ENCODE measurements at regions of chr12 and their contacts with region 1.

Region 1: GRCh38 chr12:131104463-131105350 is 151.0 kb downstream of the ADGRD1 start:
- DNase-seq: peak; percentile 84
- H3K4me3 ChIP-seq: no peak overlapping the region
- H3K27ac ChIP-seq: no peak overlapping the region
- H3K4me1 ChIP-seq: no peaks in the 10 kb centered on the region
- H3K27me3 ChIP-seq: no peaks in the 10 kb centered on the region
- CTCF ChIP-seq: peak; percentile 81

Region 2: DNA sequence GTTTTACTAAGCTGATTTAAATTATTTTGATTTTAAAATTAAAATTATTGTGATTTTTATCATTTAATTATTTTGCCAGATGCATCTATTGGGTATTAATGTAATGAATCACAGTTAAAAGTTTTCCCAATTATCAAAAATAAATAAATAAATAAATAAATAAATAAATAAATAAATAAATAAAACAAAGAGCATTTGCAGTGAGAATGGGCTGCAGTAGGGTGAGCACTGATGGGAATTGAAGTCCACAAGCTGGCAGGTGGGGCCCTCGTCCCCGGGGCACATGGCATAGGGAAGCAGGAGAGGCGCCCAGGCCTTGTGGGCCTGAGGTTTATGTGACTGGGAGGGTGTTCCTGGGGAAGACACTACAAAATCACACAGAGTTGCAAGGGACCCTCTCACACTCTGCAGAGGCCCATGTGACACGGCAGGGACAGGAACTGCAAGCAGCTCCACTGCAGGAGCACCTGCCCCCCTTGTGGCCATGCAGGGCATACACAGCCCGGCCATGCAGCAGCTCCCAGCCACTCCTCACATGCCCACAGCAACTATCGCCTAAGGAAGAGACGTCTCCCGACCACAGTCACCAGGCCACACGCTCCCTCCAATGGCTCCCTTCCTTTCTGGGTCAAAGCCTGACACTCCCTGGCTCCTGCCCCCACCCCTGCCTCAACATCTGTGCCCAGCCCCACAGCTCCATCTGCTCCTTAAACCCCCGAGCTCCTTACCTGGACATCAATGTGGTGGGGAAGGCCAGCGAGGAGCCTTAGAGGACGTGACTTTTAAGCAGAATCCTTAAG is 349.9 kb after region 1 on chr12:
- intact Hi-C with region 1: loop called (anchors 5 kb)
- DNase-seq: no peak
- H3K4me3 ChIP-seq: no peak overlapping the region
- H3K27ac ChIP-seq: no peak overlapping the region
- H3K4me1 ChIP-seq: no peaks in the 10 kb centered on the region
- H3K27me3 ChIP-seq: no peaks in the 10 kb centered on the region
- CTCF ChIP-seq: peak; percentile 52

Region 3: DNA sequence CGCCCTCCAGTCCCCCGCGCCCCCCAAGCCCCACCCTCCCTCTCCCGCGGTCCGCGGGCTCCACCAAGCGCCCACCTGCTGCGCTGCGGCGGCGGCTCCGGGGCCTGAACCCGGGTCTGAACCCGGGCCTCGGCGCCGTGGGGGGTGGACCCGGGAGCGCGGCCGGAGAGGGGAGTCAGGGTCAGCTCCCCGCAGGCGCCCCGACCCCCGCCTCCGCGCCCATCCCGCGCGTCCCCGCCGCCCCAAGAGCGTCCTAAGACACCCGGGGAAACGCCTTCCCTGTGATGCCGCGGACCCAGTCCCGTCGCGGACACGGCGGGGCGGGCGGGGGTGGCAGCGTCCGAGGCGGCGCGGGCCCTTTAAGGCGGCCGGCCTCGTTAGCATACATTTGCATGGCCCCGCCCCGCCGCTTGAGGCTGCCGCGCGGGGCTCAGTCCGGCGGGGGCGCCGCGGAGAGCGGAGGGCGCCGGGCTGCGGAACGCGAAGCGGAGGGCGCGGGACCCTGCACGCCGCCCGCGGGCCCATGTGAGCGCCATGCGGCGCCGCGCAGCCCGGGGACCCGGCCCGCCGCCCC is 723.3 kb after region 1 on chr12 and contains the start of gene MMP17:
- intact Hi-C with region 1: loop called (anchors 10 kb)
- DNase-seq: no peak
- H3K4me3 ChIP-seq: peak within 1 kb of the TSS; percentile 35
- H3K27ac ChIP-seq: no peak within 1 kb of the TSS
- H3K4me1 ChIP-seq: no peaks in the 10 kb centered on the region
- H3K27me3 ChIP-seq: peaks cover 38% of the 10 kb centered on the region
- CTCF ChIP-seq: no peak
- total RNA-seq, gene MMP17: 1.3 to 1.9 TPM